SK-N-SH (cell line): ENCODE measurements at regions of chr20 and their contacts with region 1.

Region 1: DNA sequence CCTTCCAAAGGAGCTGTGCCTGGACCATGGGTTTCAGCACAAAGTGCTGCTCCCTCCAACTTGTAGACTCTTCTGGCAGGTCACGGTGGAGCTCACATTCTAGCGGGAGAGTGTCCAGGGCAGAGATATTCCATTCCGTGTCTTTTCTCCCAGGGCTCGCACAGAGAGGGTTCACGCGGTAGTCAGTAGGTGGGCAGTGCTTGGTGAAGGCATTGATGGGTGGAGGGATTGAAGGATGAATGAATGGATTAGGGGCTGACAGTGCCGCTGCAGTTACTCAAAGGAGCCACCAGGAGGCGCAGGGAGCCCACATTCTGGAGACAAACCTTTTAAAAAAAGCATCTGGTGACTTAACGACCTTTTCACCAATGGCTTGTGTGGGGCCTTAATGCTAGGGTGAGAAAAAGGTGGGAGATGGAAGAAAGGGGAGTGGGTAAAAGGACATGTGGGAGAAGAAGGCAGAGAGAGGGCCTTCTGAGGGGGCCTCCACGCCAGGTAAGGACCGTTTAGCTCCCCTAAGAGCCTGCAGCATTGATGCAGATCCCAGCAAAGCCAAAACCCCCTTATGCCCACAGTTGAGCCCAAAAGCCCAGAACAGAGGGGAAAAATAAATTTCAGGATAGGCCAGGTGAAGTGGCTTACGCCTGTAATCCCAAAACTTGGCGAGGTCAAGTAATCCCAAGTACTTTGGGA is 17.5 kb upstream of the FAM110A start:
- DNase-seq: peak; percentile 76
- H3K4me3 ChIP-seq: no peak overlapping the region; a peak in 1 of 4 replicates
- H3K27ac ChIP-seq: no peak overlapping the region
- H3K4me1 ChIP-seq: no peaks in the 10 kb centered on the region
- H3K27me3 ChIP-seq: no peaks in the 10 kb centered on the region
- CTCF ChIP-seq: peak; percentile 98
- EP300 ChIP-seq: no peak
- RAD21 ChIP-seq: peak; percentile 95

Region 2: GRCh38 chr20:805713-806112 is 10.3 kb before region 1 on chr20:
- CTCF ChIA-PET with region 1: interaction called, 16 read pairs
- POLR2A ChIA-PET with region 1: no interaction called
- DNase-seq: no peak
- H3K4me3 ChIP-seq: no peak overlapping the region
- H3K27ac ChIP-seq: no peak overlapping the region
- H3K4me1 ChIP-seq: no peaks in the 10 kb centered on the region
- H3K27me3 ChIP-seq: no peaks in the 10 kb centered on the region
- CTCF ChIP-seq: no peak
- EP300 ChIP-seq: no peak
- RAD21 ChIP-seq: no peak

Region 3: DNA sequence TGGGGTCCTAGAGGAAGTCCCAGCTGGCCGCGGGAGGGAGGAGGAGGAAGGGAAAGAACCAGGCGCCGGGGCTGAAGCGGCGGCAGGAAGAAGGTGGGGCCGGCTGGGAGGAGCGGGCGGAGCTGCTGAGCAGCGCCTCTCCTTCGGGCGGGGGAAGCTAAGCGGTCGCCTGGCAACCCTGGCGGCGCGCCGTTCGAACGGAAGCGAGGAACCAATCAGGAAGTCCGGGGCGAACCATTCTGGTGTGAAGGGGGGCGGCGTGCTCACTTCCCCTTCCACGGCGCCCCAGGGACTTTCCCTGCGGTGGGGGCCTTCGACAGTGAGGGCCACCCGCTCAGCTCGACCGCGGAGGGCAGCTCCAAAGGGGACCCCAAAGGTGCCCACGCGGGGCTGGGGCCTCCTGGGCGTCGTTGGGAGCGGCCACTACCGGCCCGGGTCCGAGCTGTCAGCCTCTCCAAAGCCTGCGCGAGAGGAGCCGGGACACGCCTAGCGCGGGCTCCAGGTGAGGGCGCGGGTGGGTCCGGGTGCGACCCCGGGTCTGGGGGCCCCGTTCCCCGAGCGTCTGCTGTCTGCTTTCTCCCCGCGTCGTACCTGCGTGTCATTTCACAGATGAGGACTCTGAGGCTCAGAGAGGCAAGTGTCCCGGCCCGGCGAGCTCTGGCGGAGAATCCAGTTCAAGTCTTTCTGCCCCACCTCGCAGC is 17.5 kb after region 1 on chr20 and contains the start of gene FAM110A:
- CTCF ChIA-PET with region 1: interaction called, 11 read pairs
- POLR2A ChIA-PET with region 1: no interaction called
- DNase-seq: peak; percentile 95
- H3K4me3 ChIP-seq: peak within 1 kb of the TSS; percentile 67 to 85
- H3K27ac ChIP-seq: peak within 1 kb of the TSS; percentile 88 to 92
- H3K4me1 ChIP-seq: peaks cover 6 to 12% of the 10 kb centered on the region in 2 experiments; a peak in 2 of 4 replicates
- H3K27me3 ChIP-seq: no peaks in the 10 kb centered on the region
- CTCF ChIP-seq: no peak
- EP300 ChIP-seq: no peak
- RAD21 ChIP-seq: no peak
- polyA plus RNA-seq, gene FAM110A: 2.5 and 3.8 TPM in 2 replicates

Region 4: DNA sequence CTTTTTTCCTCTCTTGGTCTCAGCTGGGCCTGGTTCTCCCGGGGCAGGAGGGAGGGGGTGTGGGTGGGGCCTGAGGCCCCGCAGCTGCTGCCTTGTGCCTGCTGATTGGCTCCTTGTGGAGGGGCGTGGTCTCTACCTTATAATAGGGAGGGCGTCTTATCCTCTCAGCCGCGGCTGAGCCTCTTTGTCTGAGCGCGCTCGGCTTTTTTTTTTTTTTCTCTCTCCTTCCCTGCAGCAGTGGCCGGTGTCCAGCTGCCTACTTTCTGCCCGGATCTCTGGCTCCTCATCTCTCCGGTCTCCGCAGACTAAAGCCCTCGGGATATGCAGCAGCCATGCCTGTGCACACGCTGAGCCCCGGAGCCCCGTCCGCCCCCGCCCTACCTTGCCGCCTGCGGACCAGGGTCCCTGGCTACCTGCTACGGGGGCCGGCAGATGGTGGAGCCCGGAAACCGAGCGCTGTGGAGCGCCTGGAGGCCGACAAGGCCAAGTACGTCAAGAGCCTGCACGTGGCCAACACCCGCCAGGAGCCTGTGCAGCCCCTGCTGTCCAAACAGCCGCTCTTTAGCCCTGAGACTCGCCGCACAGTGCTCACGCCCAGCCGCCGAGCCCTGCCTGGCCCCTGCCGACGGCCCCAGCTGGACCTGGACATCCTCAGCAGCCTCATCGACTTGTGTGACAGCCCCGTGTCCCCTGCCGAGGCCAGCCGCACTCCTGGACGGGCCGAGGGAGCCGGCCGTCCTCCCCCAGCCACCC is 28.6 kb after region 1 on chr20:
- CTCF ChIA-PET with region 1: interaction called, 10 read pairs
- POLR2A ChIA-PET with region 1: no interaction called
- DNase-seq: peak; percentile 99
- H3K4me3 ChIP-seq: peak overlapping the region; percentile 50 to 65
- H3K27ac ChIP-seq: peak overlapping the region; percentile 38 to 89; a peak in 2 of 4 replicates
- H3K4me1 ChIP-seq: peaks cover 0 to 50% of the 10 kb centered on the region in 2 experiments; a peak in 1 of 4 replicates
- H3K27me3 ChIP-seq: no peaks in the 10 kb centered on the region
- CTCF ChIP-seq: no peak
- EP300 ChIP-seq: peak in 1 of 2 experiments; percentile 14; a peak in 1 of 4 replicates
- RAD21 ChIP-seq: no peak

Region 5: GRCh38 chr20:967796-968742 is 152.0 kb after region 1 on chr20:
- CTCF ChIA-PET with region 1: interaction called, 267 read pairs
- POLR2A ChIA-PET with region 1: no interaction called
- DNase-seq: peak; percentile 62
- H3K4me3 ChIP-seq: no peak overlapping the region
- H3K27ac ChIP-seq: no peak overlapping the region
- H3K4me1 ChIP-seq: no peaks in the 10 kb centered on the region; a peak in 1 of 4 replicates
- H3K27me3 ChIP-seq: peaks cover 11% of the 10 kb centered on the region; the same call in 1 of the 2 replicates
- CTCF ChIP-seq: no peak
- EP300 ChIP-seq: no peak
- RAD21 ChIP-seq: no peak

Region 6: DNA sequence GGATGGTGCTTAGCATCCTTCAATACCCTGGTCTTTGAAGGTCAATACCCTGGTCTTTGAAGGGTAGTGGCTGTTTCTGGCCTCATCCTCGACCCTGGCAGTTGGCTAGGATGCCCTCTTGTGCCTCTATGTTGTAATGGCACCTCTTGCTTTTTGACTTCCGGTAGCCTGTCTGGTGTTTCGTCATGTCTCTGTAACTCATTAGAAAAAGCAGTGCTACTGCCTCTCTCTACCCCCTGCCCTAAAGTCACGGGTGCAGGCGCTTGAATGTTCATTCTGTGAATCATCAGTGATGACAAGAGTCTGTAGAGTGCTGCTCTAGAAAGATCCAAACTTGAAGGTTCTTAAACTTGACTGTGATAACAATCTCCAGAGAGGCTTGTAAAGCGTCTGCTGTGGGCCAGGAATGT is 157.7 kb after region 1 on chr20:
- CTCF ChIA-PET with region 1: interaction called, 11 read pairs
- POLR2A ChIA-PET with region 1: no interaction called
- DNase-seq: peak; percentile 55
- H3K4me3 ChIP-seq: no peak overlapping the region
- H3K27ac ChIP-seq: no peak overlapping the region
- H3K4me1 ChIP-seq: peaks cover 0 to 10% of the 10 kb centered on the region in 2 experiments; a peak in 1 of 4 replicates
- H3K27me3 ChIP-seq: peaks cover 5% of the 10 kb centered on the region; the same call in 1 of the 2 replicates
- CTCF ChIP-seq: peak; percentile 45
- EP300 ChIP-seq: no peak
- RAD21 ChIP-seq: peak; percentile 50

Region 7: DNA sequence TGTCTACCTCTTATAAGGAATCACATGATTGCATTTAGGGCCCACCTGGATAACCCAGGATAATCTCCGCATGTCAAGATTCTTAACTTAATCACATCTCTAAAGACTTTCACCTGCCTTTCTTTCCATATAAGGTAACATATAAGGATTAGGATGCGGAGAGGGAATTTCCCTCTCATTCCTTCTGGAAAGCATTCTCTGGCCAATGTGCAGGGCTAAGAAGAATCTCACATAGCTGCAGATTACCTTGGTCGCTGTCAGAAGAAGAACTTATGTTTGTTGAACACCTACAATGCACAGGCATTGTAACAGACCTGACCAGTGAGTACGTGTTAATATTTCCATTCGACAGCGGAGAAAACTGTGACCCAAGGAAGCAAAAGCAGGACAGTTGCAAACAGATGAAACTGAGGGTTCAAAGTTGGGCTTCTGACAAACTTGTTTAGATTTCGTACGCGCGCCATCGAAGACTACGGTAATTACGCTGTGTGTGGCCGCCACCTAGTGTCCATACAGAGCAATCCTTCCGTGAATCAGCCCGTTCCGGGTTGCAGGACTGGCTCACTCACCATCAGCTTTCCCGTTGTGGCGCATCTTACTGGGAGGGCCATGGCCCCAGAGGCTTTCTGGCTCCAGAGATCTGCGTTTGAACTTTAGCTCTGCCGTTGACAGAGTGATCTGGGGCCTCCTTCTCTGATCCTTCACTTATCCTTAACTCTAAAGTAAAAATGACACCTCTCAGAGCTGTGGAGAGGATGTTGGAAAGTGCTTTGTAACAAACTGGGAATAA is 396.7 kb after region 1 on chr20:
- CTCF ChIA-PET with region 1: interaction called, 20 read pairs
- POLR2A ChIA-PET with region 1: no interaction called
- DNase-seq: peak; percentile 74
- H3K4me3 ChIP-seq: no peak overlapping the region; a peak in 1 of 4 replicates
- H3K27ac ChIP-seq: no peak overlapping the region
- H3K4me1 ChIP-seq: no peaks in the 10 kb centered on the region; a peak in 1 of 4 replicates
- H3K27me3 ChIP-seq: no peaks in the 10 kb centered on the region; the same call in 1 of the 2 replicates
- CTCF ChIP-seq: peak; percentile 77
- EP300 ChIP-seq: no peak
- RAD21 ChIP-seq: peak; percentile 82